ENCODE measurements at regions of chr1 and their contacts with region 1.

Region 1: DNA sequence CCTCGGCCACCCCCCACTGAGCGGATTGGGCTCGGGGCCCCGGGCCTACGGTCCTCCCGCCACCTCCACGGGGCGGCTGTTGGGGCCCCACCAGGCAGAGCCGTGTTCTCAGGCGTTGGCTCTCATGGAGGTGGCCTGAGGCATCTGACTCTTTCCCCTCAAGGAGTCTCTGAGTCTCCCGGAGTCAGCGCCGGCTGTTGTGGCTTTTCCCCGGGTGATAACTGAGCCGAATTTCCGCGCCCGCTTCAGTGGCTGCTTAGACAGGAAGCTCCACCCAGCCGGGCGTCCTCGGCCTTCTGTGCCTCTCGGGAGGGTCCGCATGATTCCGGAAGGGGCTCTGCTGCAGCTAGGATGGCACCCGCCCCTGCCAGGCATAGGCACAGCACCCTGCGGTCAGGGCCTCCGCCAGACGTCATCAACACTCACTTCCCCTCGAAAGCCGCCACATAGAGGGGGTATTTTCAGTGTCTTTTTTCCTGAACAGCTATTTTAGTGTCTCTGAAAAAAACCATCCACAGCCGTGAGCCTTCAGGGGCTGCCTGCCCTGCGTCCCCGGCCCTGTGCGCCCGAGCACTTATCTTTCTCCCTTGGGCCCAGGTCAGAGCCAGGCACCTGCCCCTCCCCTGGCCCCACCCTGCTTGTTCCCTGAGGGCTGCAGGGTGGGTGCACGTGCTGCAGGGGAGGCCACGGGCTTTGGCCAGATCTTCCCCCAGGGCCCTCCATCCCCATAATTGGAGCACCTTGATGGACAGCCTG is 72.9 kb downstream of the SKI start:
- DNase-seq: peak; percentile 80
- CTCF ChIP-seq: no peak

Region 2: GRCh38 chr1:2314803-2315673 is 14.0 kb after region 1 on chr1:
- CTCF ChIA-PET with region 1: interaction called, 16 read pairs
- POLR2A ChIA-PET with region 1: no interaction called
- DNase-seq: peak; percentile 88
- CTCF ChIP-seq: peak; percentile 64

Measured in GM10248 (cell line).